Endothelial cell of umbilical vein (primary cell): ENCODE measurements at regions of chr16 and their contacts with region 1.

Region 1: DNA sequence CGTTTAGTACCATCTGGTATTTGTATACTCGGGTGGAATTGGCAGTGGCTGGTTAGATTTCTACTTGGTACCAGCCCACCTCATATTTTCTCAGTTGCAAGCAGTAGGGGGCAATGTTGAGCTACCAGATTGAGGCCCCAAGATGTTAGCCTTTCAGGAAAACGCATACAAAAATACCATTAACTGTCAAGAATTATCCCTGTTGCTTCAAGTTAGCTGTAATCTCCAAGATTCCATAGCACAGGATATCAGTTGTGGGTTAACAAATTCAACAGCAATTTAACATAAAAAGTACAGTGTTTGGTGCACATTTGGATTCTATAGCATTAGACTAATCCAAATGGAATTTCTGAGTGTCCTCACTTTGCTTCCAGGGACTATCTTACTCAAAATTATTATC is 188.2 kb downstream of the FTO start:
- DNase-seq: peak; percentile 72
- H3K4me3 ChIP-seq: no peak overlapping the region
- H3K27ac ChIP-seq: no peak overlapping the region
- H3K4me1 ChIP-seq: peaks cover 23% of the 10 kb centered on the region
- H3K27me3 ChIP-seq: no peaks in the 10 kb centered on the region
- CTCF ChIP-seq: peak; percentile 57 to 66
- POLR2A ChIP-seq: no peak

Region 2: DNA sequence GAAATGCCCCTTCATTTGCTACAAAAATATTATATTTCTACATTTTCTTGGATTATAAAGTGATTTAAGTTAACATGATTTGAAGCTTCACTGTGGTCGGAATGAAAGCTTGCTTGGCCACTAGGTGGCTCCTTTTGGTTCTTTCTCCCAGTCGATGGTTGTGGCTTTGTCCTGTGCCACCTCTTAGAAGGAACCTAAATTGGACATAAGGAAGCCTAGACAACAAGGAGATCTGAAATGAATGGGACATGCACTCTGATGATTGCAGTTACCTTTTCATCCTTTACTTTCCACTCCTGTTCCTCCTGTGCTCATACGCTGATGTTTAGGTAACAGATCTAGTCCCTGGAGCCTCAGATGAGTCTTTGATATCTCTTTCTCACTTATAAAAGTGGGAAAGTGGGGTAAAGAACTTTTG is 149.0 kb before region 1 on chr16:
- CTCF ChIA-PET with region 1: interaction called, 10 read pairs
- POLR2A ChIA-PET with region 1: no interaction called
- dilution Hi-C with region 1: no loop called
- intact Hi-C with region 1: no loop called
- DNase-seq: peak; percentile 28
- H3K4me3 ChIP-seq: no peak overlapping the region
- H3K27ac ChIP-seq: no peak overlapping the region
- H3K4me1 ChIP-seq: peaks cover 11% of the 10 kb centered on the region
- H3K27me3 ChIP-seq: no peaks in the 10 kb centered on the region
- CTCF ChIP-seq: peak; percentile 63 to 67
- POLR2A ChIP-seq: no peak

Region 3: DNA sequence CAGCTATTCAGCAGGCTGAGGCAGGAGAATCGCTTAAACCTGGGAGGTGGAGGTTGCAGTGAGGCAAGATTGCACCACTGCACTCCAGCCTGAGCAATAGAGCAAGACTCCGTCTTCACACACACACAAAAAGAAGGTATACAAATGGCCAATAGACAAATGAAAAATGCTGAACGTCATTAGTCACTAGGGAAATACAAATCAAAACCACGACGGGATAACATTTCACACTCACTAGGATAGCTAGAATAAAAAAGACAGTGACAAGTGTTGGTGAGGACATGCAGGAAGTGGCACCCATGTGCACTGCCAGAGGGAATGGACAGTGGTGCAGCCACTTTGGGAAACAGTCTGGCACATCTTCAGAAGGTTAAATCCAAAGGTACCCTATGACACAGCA is 15.3 kb before region 1 on chr16:
- CTCF ChIA-PET with region 1: interaction called, 16 read pairs
- POLR2A ChIA-PET with region 1: no interaction called
- dilution Hi-C with region 1: no loop called
- intact Hi-C with region 1: no loop called
- DNase-seq: no peak
- H3K4me3 ChIP-seq: no peak overlapping the region
- H3K27ac ChIP-seq: no peak overlapping the region
- H3K4me1 ChIP-seq: no peaks in the 10 kb centered on the region
- H3K27me3 ChIP-seq: no peaks in the 10 kb centered on the region
- CTCF ChIP-seq: no peak
- POLR2A ChIP-seq: no peak

Region 4: GRCh38 chr16:54633943-54634362 is 741.8 kb after region 1 on chr16:
- CTCF ChIA-PET with region 1: no interaction called
- POLR2A ChIA-PET with region 1: no interaction called
- dilution Hi-C with region 1: no loop called
- intact Hi-C with region 1: loop called (anchors 5 kb)
- DNase-seq: peak; percentile 21
- H3K4me3 ChIP-seq: no peak overlapping the region
- H3K27ac ChIP-seq: no peak overlapping the region
- H3K4me1 ChIP-seq: no peaks in the 10 kb centered on the region
- H3K27me3 ChIP-seq: no peaks in the 10 kb centered on the region
- CTCF ChIP-seq: peak; percentile 43 to 54
- POLR2A ChIP-seq: no peak

Region 5: GRCh38 chr16:55257966-55258613 is 1365.9 kb after region 1 on chr16:
- CTCF ChIA-PET with region 1: interaction called, 9 read pairs
- POLR2A ChIA-PET with region 1: no interaction called
- dilution Hi-C with region 1: no loop called
- intact Hi-C with region 1: loop called (anchors 1 kb)
- DNase-seq: peak; percentile 53
- H3K4me3 ChIP-seq: no peak overlapping the region
- H3K27ac ChIP-seq: no peak overlapping the region
- H3K4me1 ChIP-seq: no peaks in the 10 kb centered on the region
- H3K27me3 ChIP-seq: no peaks in the 10 kb centered on the region
- CTCF ChIP-seq: peak; percentile 74 to 76
- POLR2A ChIP-seq: no peak